A549 (cell line): ENCODE measurements at regions of chr17 and their contacts with region 1.

Region 1: DNA sequence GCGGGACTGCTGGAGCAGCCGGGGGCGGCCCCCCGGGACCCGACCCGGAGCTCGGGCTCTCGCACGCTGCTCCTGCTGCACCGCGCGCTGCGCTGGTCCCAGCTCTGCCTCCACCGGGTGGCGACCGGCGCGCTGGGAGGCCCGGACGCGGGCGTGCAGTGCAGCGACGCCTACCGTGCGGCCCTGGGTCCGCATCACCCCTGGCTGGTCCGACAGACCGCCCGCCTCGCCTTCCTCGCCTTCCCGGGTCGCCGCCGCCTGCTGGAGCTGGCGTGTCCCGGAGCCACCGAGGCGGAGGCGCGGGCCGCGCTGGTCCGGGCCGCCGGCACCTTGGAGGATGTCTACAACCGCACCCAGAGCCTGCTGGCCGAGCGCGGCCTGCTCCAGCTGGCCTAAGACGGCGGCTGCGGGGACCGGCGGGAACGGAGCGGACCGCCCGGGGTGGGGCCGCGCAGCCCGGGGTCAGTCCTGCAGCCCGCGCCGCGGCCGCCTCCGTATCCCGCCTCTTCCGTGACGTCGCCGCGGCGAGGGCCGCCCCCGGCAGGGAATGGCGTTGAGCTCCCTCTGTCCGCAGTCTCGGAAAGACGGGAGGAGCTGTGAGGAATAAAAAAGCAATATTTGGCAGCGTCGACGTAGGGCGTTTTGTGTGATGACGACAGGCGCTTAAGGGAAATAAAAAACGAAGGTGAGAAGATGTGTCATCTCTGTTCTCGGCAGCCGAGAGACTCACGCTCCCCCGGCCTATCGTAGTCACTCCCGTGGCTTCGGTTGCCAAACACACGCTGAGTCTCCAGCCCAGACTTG is 1.3 kb downstream of the GLTPD2 start:
- DNase-seq: peak; percentile 94 to 99
- ATAC-seq: peak; percentile 89 to 92
- H3K4me3 ChIP-seq: peak overlapping the region; percentile 62
- H3K27ac ChIP-seq: peak overlapping the region; percentile 91 to 98
- H3K4me1 ChIP-seq: peaks cover 27% of the 10 kb centered on the region
- CTCF ChIP-seq: peak; percentile 95
- EP300 ChIP-seq: no peak; a peak in 1 of 5 replicates
- POLR2A ChIP-seq: peak; percentile 90
- RAD21 ChIP-seq: peak; percentile 43 to 75; a peak in 4 of 5 replicates

Region 2: GRCh38 chr17:4721203-4722135 is 68.6 kb before region 1 on chr17:
- CTCF ChIA-PET with region 1: interaction called, 41 read pairs
- POLR2A ChIA-PET with region 1: interaction called, 17 read pairs
- DNase-seq: peak; percentile 85 to 95
- ATAC-seq: peak; percentile 72 to 75
- H3K4me3 ChIP-seq: peak overlapping the region; percentile 26
- H3K27ac ChIP-seq: peak overlapping the region; percentile 85 to 90
- H3K4me1 ChIP-seq: peaks cover 56% of the 10 kb centered on the region
- CTCF ChIP-seq: no peak
- EP300 ChIP-seq: peak; percentile 73 to 84; a peak in 3 of 5 replicates
- POLR2A ChIP-seq: no peak
- RAD21 ChIP-seq: peak in 1 of 2 experiments; percentile 41; a peak in 2 of 5 replicates

Region 3: GRCh38 chr17:4759776-4760236 is 30.3 kb before region 1 on chr17:
- CTCF ChIA-PET with region 1: interaction called, 14 read pairs
- POLR2A ChIA-PET with region 1: no interaction called
- DNase-seq: no peak
- ATAC-seq: no peak
- H3K4me3 ChIP-seq: no peak overlapping the region
- H3K27ac ChIP-seq: no peak overlapping the region
- H3K4me1 ChIP-seq: no peaks in the 10 kb centered on the region
- CTCF ChIP-seq: no peak
- EP300 ChIP-seq: no peak
- POLR2A ChIP-seq: no peak
- RAD21 ChIP-seq: no peak

Region 4: GRCh38 chr17:4818276-4818675 is 28.2 kb after region 1 on chr17:
- CTCF ChIA-PET with region 1: interaction called, 14 read pairs
- POLR2A ChIA-PET with region 1: interaction called, 4 read pairs
- DNase-seq: no peak
- ATAC-seq: peak in 1 of 2 experiments; percentile 51; a peak in 3 of 6 replicates
- H3K4me3 ChIP-seq: no peak overlapping the region
- H3K27ac ChIP-seq: no peak overlapping the region
- H3K4me1 ChIP-seq: no peaks in the 10 kb centered on the region
- CTCF ChIP-seq: no peak
- EP300 ChIP-seq: no peak
- POLR2A ChIP-seq: no peak
- RAD21 ChIP-seq: no peak

Region 5: DNA sequence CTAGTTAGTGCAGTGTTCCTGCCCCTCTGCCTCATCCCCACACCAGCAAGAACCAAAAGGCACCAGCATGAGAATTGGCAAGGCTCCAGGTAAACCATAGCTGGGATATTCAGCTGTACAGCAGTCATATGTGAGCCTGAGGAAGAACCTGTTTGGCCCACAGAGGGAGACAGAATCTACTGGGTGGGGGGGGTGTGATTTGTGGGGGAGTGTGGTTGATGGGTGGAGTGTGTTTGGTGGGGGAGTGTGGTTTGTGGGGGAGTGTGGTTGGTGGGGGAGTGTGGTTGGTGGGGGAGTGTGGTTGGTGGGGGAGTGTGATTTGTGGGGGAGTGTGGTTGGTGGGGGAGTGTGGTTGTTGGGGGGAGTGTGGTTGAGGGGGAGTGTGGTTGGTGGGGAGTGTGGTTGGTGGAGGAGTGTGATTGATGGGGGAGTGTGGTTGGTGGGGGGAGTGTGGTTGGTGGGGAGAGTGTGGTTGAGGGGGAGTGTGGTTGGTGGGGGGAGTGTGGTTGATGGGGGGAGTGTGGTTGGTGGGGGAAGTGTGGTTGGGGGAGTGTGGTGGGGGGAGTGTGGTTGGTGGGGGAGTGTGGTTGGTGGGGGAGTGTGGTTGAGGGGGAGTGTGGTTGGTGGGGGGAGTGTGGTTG is 62.6 kb after region 1 on chr17:
- CTCF ChIA-PET with region 1: interaction called, 18 read pairs
- POLR2A ChIA-PET with region 1: interaction called, 6 read pairs
- DNase-seq: peak in 1 of 2 experiments; percentile 56
- ATAC-seq: peak; percentile 36 to 40
- H3K4me3 ChIP-seq: no peak overlapping the region
- H3K27ac ChIP-seq: peak overlapping the region; percentile 24 to 83; a peak in 4 of 6 replicates
- H3K4me1 ChIP-seq: peaks cover 65% of the 10 kb centered on the region
- CTCF ChIP-seq: no peak
- EP300 ChIP-seq: no peak
- POLR2A ChIP-seq: no peak
- RAD21 ChIP-seq: no peak

Region 6: DNA sequence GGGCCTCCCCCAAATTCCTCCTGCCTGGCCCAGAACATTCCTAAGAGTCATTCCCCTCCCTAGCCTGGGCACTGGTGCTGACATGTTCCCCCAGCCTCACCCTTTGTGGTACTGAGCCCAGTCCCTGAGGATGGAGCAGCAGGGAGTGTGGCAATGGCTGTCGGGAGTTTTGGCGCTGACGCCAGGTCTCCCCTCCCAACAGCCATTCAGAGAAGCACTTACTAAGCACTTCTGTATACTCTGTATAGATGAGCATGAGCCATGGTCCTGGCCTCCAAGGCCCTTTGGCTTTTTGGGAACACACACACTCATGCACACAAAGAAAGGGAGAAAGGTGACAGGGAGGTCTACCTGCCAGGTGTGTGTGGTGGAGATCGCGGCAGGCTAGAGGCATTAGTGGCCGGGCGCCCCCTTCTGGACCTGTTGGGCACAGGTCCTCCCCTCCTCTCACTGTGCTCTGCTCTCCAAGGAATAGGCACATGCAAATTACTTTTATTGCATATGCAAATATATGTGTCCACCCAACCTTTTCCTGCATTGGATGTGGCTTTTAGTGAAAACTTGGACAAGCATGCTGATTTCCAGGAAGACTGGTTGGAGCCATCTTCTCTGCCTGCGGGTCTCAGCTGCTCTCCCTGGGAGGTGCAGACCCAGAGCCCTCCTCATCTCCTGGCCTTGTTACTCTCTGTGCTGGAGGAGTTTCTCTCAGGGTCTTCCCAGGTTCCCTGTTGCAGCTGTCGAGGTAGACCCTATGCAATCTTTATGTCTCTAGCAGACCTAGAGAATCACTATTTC is 91.9 kb after region 1 on chr17:
- CTCF ChIA-PET with region 1: interaction called, 271 read pairs
- POLR2A ChIA-PET with region 1: interaction called, 3 read pairs
- DNase-seq: peak; percentile 70 to 71
- ATAC-seq: peak; percentile 84 to 93
- H3K4me3 ChIP-seq: no peak overlapping the region
- H3K27ac ChIP-seq: no peak overlapping the region
- H3K4me1 ChIP-seq: no peaks in the 10 kb centered on the region
- CTCF ChIP-seq: peak; percentile 95
- EP300 ChIP-seq: no peak
- POLR2A ChIP-seq: no peak
- RAD21 ChIP-seq: peak; percentile 87 to 91